Mammary epithelial cell (primary cell): ENCODE measurements at regions of chr6 and their contacts with region 1.

Region 1: GRCh38 chr6:105272786-105273185 is 93.0 kb upstream of the POPDC3 start:
- DNase-seq: no peak
- H3K4me3 ChIP-seq: no peak overlapping the region
- H3K27ac ChIP-seq: no peak overlapping the region
- H3K4me1 ChIP-seq: no peaks in the 10 kb centered on the region
- H3K27me3 ChIP-seq: no peaks in the 10 kb centered on the region
- CTCF ChIP-seq: no peak

Region 2: GRCh38 chr6:105179244-105180065 is 93.3 kb before region 1 on chr6 and contains the start of gene POPDC3:
- CTCF ChIA-PET with region 1: no interaction called
- dilution Hi-C with region 1: no loop called
- in situ Hi-C with region 1: no loop called
- intact Hi-C with region 1: loop called (anchors 5 kb)
- DNase-seq: peak; percentile 57
- H3K4me3 ChIP-seq: peak within 1 kb of the TSS; percentile 57 to 76 (median 68)
- H3K27ac ChIP-seq: peak within 1 kb of the TSS; percentile 87
- H3K4me1 ChIP-seq: peaks cover 10% of the 10 kb centered on the region
- H3K27me3 ChIP-seq: no peaks in the 10 kb centered on the region
- CTCF ChIP-seq: no peak
- total RNA-seq, gene POPDC3: 14.4 to 34.0 TPM